ENCODE measurements at regions of chr6 and their contacts with region 1.

Region 1: DNA sequence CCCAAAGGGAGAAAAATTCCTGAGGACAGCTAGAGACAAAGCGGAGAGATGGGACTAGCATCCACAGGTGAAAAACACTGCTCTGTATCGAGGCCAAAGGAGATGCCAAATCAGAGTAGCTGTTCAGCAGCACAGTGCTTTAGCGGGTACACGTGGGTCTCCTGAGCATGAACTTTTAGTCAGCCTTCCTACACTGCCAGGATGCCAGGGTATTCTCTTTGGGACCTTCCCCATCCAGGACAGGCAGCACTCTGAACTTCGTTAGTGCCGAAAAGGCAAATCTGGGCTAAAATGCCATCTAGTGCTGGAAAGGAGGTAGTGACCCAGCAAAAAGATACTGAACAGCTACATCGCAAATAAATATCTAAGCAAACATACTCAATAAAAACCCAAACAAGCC is 64.9 kb downstream of the C6orf58 start:
- DNase-seq: peak; percentile 24
- ATAC-seq: peak; percentile 93
- H3K4me3 ChIP-seq: no peak overlapping the region
- H3K27ac ChIP-seq: no peak overlapping the region
- H3K4me1 ChIP-seq: no peaks in the 10 kb centered on the region
- H3K27me3 ChIP-seq: no peaks in the 10 kb centered on the region
- CTCF ChIP-seq: peak; percentile 60 to 76 (median 75); a peak in 5 of 6 replicates
- POLR2A ChIP-seq: no peak
- RAD21 ChIP-seq: peak; percentile 73

Region 2: DNA sequence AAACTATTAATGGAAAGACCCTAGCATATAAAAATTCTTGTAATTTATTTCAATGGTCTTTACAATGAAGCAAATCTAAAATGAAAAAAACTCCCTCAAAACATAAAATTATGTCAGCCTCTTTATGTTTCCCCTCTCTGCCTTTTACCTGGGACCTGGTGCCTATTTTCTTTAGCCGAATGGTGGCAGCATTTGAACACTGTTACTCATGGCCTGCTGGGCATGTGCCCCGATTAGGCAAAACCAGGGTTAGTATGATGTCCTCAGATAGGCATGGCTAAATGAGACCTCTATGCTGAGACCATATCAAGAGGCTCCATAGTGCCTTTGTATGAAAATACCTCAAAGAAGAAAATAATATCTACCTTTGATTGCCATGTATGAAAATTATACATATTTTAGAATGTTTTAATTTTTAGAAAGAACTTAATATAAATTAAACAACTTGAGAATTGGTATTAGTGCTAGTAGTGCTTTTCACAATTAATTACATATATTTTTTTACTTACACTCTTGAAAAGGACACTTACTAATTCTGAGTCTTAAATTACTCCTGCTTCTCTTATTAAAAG is 87.4 kb before region 1 on chr6:
- CTCF ChIA-PET with region 1: interaction called, 4 read pairs
- POLR2A ChIA-PET with region 1: no interaction called
- RAD21 ChIA-PET with region 1: no interaction called
- intact Hi-C with region 1: loop called (anchors 1 kb)
- DNase-seq: peak; percentile 60
- ATAC-seq: peak; percentile 100
- H3K4me3 ChIP-seq: no peak overlapping the region
- H3K27ac ChIP-seq: no peak overlapping the region
- H3K4me1 ChIP-seq: no peaks in the 10 kb centered on the region
- H3K27me3 ChIP-seq: no peaks in the 10 kb centered on the region
- CTCF ChIP-seq: peak; percentile 60 to 73 (median 70); a peak in 5 of 6 replicates
- POLR2A ChIP-seq: no peak
- RAD21 ChIP-seq: peak; percentile 86

Region 3: GRCh38 chr6:127630800-127631199 is 11.1 kb before region 1 on chr6:
- CTCF ChIA-PET with region 1: interaction called, 10 read pairs
- POLR2A ChIA-PET with region 1: no interaction called
- RAD21 ChIA-PET with region 1: no interaction called
- intact Hi-C with region 1: no loop called
- DNase-seq: no peak
- ATAC-seq: no peak
- H3K4me3 ChIP-seq: no peak overlapping the region
- H3K27ac ChIP-seq: no peak overlapping the region
- H3K4me1 ChIP-seq: no peaks in the 10 kb centered on the region
- H3K27me3 ChIP-seq: no peaks in the 10 kb centered on the region
- CTCF ChIP-seq: no peak
- POLR2A ChIP-seq: no peak
- RAD21 ChIP-seq: no peak